RWPE1 (cell line): ENCODE measurements at regions of chr11 and their contacts with region 1.

Region 1: GRCh38 chr11:65779851-65780577 is 762 bp downstream of the AP5B1 start:
- DNase-seq: peak; percentile 52
- H3K27ac ChIP-seq: peak overlapping the region; percentile 76
- CTCF ChIP-seq: peak; percentile 95

Region 2: GRCh38 chr11:65685981-65686380 is 94.0 kb before region 1 on chr11:
- CTCF ChIA-PET with region 1: no interaction called
- POLR2A ChIA-PET with region 1: no interaction called
- DNase-seq: no peak
- H3K27ac ChIP-seq: no peak overlapping the region
- CTCF ChIP-seq: no peak

Region 3: DNA sequence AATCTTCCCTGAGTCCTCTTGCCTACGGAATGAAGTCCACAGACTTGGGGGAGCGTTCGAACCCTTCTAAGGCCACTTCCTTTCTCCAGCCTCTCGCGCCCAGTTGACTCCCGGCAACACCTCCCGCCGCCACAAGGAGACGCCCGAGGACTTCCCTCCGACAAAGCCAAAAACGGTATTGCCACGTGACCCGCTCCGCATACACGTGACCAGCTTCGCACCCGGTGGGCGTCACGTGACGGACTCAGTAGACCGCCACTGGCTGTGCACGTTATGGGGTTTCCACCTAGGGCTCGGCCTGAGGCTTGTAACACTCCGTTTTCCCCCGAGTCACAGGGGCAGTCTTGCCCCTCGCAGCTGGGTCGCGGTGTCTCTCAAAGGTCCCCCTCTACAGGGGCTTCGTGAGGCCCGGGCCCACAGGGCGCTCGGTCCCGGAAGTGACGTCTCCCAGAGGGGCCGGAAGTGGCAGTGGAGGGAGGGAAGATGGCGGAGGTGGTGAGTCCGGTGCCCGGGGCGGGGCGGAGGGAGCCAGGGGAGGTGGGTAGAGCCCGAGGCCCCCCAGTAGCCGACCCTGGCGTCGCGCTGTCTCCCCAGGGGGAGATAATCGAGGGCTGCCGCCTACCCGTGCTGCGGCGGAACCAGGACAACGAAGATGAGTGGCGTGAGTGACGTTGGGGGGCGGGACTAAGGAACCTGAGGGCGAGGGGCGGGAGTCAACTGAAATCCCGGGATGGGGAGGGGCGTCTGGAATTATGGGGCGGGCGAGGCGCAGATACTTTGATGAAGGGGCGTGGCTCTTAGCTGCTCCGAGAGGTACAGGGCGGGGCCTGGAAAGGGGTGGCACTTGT is 68.0 kb before region 1 on chr11 and contains the start of gene KAT5:
- CTCF ChIA-PET with region 1: interaction called, 25 read pairs
- POLR2A ChIA-PET with region 1: no interaction called
- DNase-seq: peak; percentile 95
- H3K27ac ChIP-seq: peak within 1 kb of the TSS; percentile 95
- CTCF ChIP-seq: peak; percentile 99

Region 4: DNA sequence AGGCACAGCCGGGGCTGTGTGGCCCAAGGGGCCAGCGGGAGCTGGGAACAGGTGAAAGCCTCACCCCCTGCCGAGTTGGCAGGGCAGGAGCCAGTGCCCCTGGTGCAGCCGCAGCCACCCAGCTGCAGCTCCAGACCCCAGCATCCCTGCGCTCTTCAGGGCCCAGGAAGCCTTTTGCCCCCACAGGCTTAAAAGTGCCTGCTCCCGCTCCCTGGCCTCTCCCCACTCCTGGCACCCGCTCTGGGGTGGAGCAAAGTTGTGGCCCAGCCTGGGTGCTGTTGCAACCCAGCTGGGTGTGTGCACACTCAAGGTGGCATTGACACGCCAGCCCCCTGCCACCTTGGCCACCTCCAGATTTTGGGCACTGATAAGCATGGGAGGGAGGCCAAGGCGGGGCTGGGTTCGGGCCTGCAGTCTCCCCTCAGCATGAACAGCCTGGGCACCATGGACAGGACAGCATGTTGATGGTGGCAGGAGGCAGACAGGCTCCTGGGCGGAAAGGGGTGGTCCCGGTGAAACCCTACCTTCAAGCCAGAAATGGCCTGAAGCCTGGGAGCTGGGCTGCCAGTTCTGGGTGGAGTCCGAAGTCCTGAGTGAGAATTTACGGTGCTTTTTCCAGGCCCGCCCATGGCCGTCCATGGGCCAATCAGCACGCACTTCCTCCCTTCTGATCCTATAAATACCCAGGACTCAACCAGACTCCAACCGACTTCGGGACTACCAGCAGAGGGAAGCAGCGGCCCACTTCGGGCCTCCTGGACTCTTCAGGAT is 35.9 kb before region 1 on chr11:
- CTCF ChIA-PET with region 1: interaction called, 15 read pairs
- POLR2A ChIA-PET with region 1: no interaction called
- DNase-seq: peak; percentile 34
- H3K27ac ChIP-seq: no peak overlapping the region
- CTCF ChIP-seq: 0 out of 2 replicates have a peak, but pooled peaks have one; percentile 14

Region 5: DNA sequence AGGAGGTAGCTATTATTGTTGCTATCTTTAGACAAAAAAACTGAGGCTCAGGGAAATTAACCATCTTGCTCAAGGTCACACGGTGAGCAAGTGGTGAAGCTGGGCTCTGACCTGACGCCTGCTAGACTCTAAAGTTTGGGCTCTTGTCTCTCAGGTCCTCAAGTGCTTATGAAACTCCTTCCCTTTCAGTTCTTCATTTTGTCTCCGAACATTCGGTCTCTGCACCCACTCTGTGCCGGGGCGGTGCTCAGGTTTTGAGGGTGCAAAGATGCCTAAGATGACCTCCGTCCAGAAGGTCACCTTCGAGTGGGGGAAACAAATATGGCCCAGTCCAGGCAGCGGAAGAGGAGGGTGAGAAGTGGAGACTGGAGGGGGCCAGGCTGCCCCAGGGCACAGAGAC is 22.8 kb after region 1 on chr11:
- CTCF ChIA-PET with region 1: interaction called, 13 read pairs
- POLR2A ChIA-PET with region 1: interaction called, 12 read pairs
- DNase-seq: no peak
- H3K27ac ChIP-seq: no peak overlapping the region
- CTCF ChIP-seq: no peak